ENCODE measurements at regions of chr14 and their contacts with region 1.

Region 1: DNA sequence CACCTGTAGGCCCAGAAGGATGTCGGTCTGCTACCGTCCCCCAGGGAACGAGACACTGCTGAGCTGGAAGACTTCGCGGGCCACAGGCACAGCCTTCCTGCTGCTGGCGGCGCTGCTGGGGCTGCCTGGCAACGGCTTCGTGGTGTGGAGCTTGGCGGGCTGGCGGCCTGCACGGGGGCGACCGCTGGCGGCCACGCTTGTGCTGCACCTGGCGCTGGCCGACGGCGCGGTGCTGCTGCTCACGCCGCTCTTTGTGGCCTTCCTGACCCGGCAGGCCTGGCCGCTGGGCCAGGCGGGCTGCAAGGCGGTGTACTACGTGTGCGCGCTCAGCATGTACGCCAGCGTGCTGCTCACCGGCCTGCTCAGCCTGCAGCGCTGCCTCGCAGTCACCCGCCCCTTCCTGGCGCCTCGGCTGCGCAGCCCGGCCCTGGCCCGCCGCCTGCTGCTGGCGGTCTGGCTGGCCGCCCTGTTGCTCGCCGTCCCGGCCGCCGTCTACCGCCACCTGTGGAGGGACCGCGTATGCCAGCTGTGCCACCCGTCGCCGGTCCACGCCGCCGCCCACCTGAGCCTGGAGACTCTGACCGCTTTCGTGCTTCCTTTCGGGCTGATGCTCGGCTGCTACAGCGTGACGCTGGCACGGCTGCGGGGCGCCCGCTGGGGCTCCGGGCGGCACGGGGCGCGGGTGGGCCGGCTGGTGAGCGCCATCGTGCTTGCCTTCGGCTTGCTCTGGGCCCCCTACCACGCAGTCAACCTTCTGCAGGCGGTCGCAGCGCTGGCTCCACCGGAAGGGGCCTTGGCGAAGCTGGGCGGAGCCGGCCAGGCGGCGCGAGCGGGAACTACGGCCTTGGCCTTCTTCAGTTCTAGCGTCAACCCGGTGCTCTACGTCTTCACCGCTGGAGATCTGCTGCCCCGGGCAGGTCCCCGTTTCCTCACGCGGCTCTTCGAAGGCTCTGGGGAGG is at the start of gene LTB4R:
- DNase-seq: peak; percentile 41 to 89 (median 68)
- ATAC-seq: peak; percentile 80
- H3K4me3 ChIP-seq: peak within 1 kb of the TSS; percentile 52 to 57
- H3K4me3 Mint-ChIP-seq: peak within 1 kb of the TSS; percentile 75
- H3K27ac ChIP-seq: peak within 1 kb of the TSS; percentile 63 to 78
- H3K27ac Mint-ChIP-seq: peak within 1 kb of the TSS; percentile 90
- H3K4me1 ChIP-seq: peaks cover 62% of the 10 kb centered on the region
- H3K4me1 Mint-ChIP-seq: peaks cover 72% of the 10 kb centered on the region
- H3K27me3 ChIP-seq: no peaks in the 10 kb centered on the region
- H3K27me3 Mint-ChIP-seq: no peaks in the 10 kb centered on the region
- CTCF ChIP-seq: no peak
- total RNA-seq, gene LTB4R: 15.4 to 16.7 TPM

Region 2: DNA sequence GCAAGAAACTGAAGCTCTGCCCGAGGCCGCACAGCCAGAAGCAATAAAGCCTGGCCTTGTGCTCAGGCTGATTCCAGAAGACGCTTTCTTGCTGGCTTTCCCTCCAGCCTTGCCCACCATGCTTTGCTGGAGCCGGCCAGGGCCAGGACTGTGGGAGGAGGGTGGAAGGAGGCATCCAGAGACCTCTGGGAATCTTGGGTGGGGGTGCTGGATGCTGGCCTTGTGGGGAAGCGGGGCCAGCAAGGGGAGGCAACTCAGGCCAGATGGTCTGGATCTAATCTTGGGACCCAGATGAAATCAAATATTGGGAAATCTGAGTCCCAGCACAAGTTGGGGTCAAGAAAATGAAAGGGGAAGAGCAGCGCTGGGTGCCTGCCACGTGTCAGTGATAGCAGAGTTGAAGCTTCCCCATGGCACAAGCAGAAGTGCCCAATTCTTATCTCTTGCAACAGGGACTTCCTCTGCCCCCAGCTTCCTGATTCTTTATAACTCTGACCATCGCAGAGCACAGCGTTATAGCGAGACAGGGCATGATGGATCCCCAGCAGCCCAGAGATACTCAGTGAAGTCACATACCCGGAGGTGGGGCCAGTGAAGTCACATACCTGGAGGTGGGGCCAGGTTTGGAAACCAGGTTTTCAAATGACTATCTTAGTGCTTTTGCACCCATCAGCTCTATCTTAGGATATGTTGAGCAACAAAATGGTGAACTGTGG is 33.2 kb before region 1 on chr14:
- CTCF ChIA-PET with region 1: interaction called, 23 read pairs
- POLR2A ChIA-PET with region 1: interaction called, 3 read pairs
- intact Hi-C with region 1: loop called in 1 of 2 experiments (anchors 5 kb)
- DNase-seq: peak in 1 of 9 experiments; percentile 21
- ATAC-seq: no peak
- H3K4me3 ChIP-seq: no peak overlapping the region
- H3K4me3 Mint-ChIP-seq: no peak overlapping the region
- H3K27ac ChIP-seq: no peak overlapping the region
- H3K27ac Mint-ChIP-seq: no peak overlapping the region
- H3K4me1 ChIP-seq: peaks cover 30% of the 10 kb centered on the region
- H3K4me1 Mint-ChIP-seq: peaks cover 36% of the 10 kb centered on the region
- H3K27me3 ChIP-seq: no peaks in the 10 kb centered on the region
- H3K27me3 Mint-ChIP-seq: no peaks in the 10 kb centered on the region
- CTCF ChIP-seq: no peak

Region 3: GRCh38 chr14:24289649-24290249 is 21.2 kb before region 1 on chr14:
- CTCF ChIA-PET with region 1: interaction called, 33 read pairs
- POLR2A ChIA-PET with region 1: interaction called, 4 read pairs
- intact Hi-C with region 1: no loop called
- DNase-seq: peak in 4 of 9 experiments; percentile 3 to 65 (median 20)
- ATAC-seq: peak; percentile 31
- H3K4me3 ChIP-seq: no peak overlapping the region
- H3K4me3 Mint-ChIP-seq: no peak overlapping the region
- H3K27ac ChIP-seq: no peak overlapping the region
- H3K27ac Mint-ChIP-seq: no peak overlapping the region
- H3K4me1 ChIP-seq: peaks cover 10% of the 10 kb centered on the region
- H3K4me1 Mint-ChIP-seq: peaks cover 2% of the 10 kb centered on the region
- H3K27me3 ChIP-seq: no peaks in the 10 kb centered on the region
- H3K27me3 Mint-ChIP-seq: no peaks in the 10 kb centered on the region
- CTCF ChIP-seq: no peak

Region 4: GRCh38 chr14:24299255-24300195 is 11.4 kb before region 1 on chr14 and contains the starts of genes DHRS1 and NOP9:
- CTCF ChIA-PET with region 1: interaction called, 50 read pairs
- POLR2A ChIA-PET with region 1: interaction called, 35 read pairs
- intact Hi-C with region 1: loop called in 1 of 2 experiments (anchors 1 kb)
- DNase-seq: peak; percentile 82 to 98 (median 92)
- ATAC-seq: peak; percentile 78
- H3K4me3 ChIP-seq: peak within 1 kb of the TSS; percentile 80 to 83
- H3K4me3 Mint-ChIP-seq: peak within 1 kb of the TSS; percentile 94
- H3K27ac ChIP-seq: peak within 1 kb of the TSS; percentile 80 to 85
- H3K27ac Mint-ChIP-seq: peak within 1 kb of the TSS; percentile 96
- H3K4me1 ChIP-seq: peaks cover 28% of the 10 kb centered on the region
- H3K4me1 Mint-ChIP-seq: peaks cover 51% of the 10 kb centered on the region
- H3K27me3 ChIP-seq: no peaks in the 10 kb centered on the region
- H3K27me3 Mint-ChIP-seq: no peaks in the 10 kb centered on the region
- CTCF ChIP-seq: no peak
- total RNA-seq, gene DHRS1: 24.3 to 28.5 TPM
- total RNA-seq, gene NOP9: 35.6 to 35.8 TPM